Activated CD4-positive, alpha-beta T cell treated with anti-CD3 and anti-CD28 coated beads, Interleukin-2, amount 10 ng/mL, durations not matched to agents 24 days and 14 days (primary cell): ENCODE measurements at regions of chr18 and their contacts with region 1.

Region 1: GRCh38 chr18:1585879-1586488 is 681.3 kb downstream of the ADCYAP1 start:
- DNase-seq: no peak
- H3K4me3 Mint-ChIP-seq: no peak overlapping the region
- H3K27ac Mint-ChIP-seq: no peak overlapping the region
- H3K4me1 Mint-ChIP-seq: peaks cover 2% of the 10 kb centered on the region
- H3K27me3 Mint-ChIP-seq: peaks cover 4% of the 10 kb centered on the region

Region 2: GRCh38 chr18:1383464-1383863 is 202.5 kb before region 1 on chr18:
- intact Hi-C with region 1: no loop called
- DNase-seq: no peak
- H3K4me3 Mint-ChIP-seq: no peak overlapping the region
- H3K27ac Mint-ChIP-seq: no peak overlapping the region
- H3K4me1 Mint-ChIP-seq: no peaks in the 10 kb centered on the region
- H3K27me3 Mint-ChIP-seq: no peaks in the 10 kb centered on the region

Region 3: DNA sequence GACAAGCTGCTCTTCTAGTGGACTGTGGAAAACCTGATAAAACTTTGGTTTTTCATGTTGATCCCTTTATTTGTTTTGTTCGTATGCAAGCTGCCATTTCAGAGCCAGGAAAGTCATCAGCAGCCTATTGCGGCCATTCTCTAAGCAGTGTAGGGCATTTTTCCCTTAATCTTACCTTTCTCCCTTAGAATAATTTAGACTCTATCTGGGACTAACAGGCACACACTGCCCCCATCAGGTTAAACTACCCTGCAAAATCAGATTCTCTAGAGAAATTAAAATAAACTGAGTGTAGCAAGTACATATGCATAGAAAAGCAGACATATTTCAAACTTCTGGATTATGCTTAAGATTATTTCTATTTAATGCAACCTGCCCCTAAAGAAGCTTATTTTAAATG is 637.9 kb after region 1 on chr18:
- intact Hi-C with region 1: loop called (anchors 10 kb)
- DNase-seq: no peak
- H3K4me3 Mint-ChIP-seq: no peak overlapping the region
- H3K27ac Mint-ChIP-seq: no peak overlapping the region
- H3K4me1 Mint-ChIP-seq: no peaks in the 10 kb centered on the region
- H3K27me3 Mint-ChIP-seq: peaks cover 4% of the 10 kb centered on the region

Region 4: DNA sequence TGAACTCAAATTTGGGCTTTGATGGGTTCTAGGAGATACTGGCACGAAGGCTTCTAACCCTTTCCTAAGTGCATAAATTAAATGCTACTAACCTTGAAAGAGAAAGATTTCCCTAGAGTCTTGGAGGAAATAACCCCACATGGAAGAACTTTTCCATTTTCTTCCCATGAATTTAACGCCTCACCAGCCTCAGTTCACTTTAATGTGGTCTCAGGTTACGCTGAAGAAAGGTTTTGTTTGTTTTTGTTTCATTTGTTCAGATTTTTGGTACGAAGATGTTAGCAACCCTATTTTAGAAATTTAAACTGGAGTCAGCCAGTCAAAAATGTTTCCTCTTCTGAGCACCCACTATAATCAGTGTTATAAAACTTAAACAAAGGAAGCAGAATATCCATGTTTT is 954.6 kb after region 1 on chr18:
- intact Hi-C with region 1: loop called (anchors 5 kb)
- DNase-seq: no peak
- H3K4me3 Mint-ChIP-seq: no peak overlapping the region
- H3K27ac Mint-ChIP-seq: no peak overlapping the region
- H3K4me1 Mint-ChIP-seq: no peaks in the 10 kb centered on the region
- H3K27me3 Mint-ChIP-seq: no peaks in the 10 kb centered on the region